ENCODE measurements at regions of chr11 and their contacts with region 1.

Region 1: GRCh38 chr11:20387241-20388095 is at the start of gene PRMT3:
- DNase-seq: peak; percentile 95
- H3K4me3 ChIP-seq: peak within 1 kb of the TSS; percentile 95
- H3K27ac ChIP-seq: peak within 1 kb of the TSS; percentile 83
- H3K4me1 ChIP-seq: no peaks in the 10 kb centered on the region
- H3K27me3 ChIP-seq: no peaks in the 10 kb centered on the region
- CTCF ChIP-seq: peak; percentile 96
- total RNA-seq, gene PRMT3: 26.4 and 26.7 TPM in 2 replicates

Region 2: DNA sequence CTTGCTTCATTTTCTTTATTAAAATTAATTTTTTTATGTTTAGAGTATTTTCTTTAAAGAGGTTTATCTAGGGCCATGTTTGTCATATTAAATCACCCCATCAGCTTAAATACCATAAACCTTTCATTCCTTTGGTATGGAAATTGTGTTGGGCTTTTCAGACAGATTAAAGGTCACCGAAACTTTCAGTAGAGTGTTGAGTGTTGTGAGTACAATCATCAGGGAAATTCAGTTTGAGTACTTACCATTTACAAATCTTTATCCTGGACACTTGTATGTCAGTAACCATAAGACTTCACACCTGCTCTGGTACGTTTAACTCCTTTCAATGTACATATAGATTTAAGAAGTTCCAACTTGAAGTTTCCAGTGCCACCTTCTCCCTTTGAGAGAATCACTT is 12.0 kb after region 1 on chr11:
- CTCF ChIA-PET with region 1: no interaction called
- POLR2A ChIA-PET with region 1: no interaction called
- intact Hi-C with region 1: no loop called
- DNase-seq: no peak
- H3K4me3 ChIP-seq: no peak overlapping the region
- H3K27ac ChIP-seq: no peak overlapping the region
- H3K4me1 ChIP-seq: no peaks in the 10 kb centered on the region
- H3K27me3 ChIP-seq: no peaks in the 10 kb centered on the region
- CTCF ChIP-seq: no peak

Region 3: DNA sequence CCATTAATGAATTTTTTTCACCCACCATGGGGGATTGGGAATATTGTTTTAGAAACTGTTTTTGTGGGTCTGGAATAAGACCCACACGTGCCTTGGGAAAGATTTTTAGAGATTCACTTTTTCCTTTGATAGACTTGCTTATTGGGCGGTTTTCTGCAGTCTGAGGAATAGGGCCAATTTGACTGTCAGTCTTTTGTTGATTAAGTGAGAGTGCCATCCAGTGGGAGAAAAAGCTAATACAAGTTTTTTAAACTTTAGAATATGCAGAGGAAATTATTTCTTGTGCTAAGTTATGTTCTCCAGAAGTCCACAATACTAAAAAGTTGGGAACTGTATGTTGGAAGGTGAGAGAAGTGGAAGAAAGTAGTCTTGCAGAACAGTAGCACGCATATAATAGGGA is 56.1 kb after region 1 on chr11:
- CTCF ChIA-PET with region 1: no interaction called
- POLR2A ChIA-PET with region 1: no interaction called
- intact Hi-C with region 1: loop called (anchors 5 kb)
- DNase-seq: peak; percentile 49
- H3K4me3 ChIP-seq: no peak overlapping the region
- H3K27ac ChIP-seq: no peak overlapping the region
- H3K4me1 ChIP-seq: no peaks in the 10 kb centered on the region
- H3K27me3 ChIP-seq: no peaks in the 10 kb centered on the region
- CTCF ChIP-seq: peak; percentile 58

Measured in A673 (cell line).